Left cardiac atrium (tissue), 4 donors: ENCODE measurements at regions of chr6 and their contacts with region 1.

Region 1: DNA sequence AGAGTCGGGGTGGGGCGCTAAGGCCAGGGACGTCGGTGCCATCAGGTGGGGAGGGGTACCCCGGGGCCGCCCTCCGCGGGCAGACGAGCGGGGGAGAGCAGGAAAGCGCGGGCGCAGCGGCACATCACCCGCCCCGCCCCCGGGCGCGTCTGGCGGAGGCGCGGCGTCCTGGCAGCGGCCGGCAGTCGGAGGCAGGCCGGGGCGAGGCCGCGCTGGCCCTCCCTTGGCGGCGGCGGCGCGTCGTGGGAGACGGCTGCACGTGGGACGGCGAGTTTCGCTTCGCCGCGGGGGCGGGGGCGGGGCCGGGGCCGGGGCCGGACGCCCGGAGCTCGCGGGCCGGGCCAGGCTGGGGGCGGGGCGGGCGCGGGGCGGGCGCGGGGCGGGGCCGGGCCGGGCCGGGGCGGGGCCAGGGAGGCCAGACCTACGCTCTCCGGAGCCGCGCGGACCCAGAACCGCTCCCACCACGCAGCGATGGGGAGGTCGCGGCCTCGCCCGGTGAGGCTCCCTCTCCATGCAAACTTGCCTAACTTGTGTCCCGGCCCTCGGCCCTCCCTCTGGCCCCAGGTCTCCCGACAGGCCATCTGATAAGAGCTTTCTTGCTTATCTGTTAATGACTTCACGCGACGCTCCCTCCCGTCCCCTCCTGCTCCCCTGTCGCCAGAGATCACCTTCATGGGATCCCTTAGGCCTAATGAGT is 12.5 kb downstream of the ITPR3 start:
- DNase-seq: peak; percentile 81
- ATAC-seq: peak; percentile 86 to 90

Region 2: GRCh38 chr6:33317669-33318425 is 315.8 kb before region 1 on chr6 and contains the start of gene ZBTB22:
- intact Hi-C with region 1: no loop called
- DNase-seq: peak; percentile 100
- ATAC-seq: peak; percentile 77 to 84
- total RNA-seq, gene ZBTB22: 14.1 to 15.7 TPM

Region 3: DNA sequence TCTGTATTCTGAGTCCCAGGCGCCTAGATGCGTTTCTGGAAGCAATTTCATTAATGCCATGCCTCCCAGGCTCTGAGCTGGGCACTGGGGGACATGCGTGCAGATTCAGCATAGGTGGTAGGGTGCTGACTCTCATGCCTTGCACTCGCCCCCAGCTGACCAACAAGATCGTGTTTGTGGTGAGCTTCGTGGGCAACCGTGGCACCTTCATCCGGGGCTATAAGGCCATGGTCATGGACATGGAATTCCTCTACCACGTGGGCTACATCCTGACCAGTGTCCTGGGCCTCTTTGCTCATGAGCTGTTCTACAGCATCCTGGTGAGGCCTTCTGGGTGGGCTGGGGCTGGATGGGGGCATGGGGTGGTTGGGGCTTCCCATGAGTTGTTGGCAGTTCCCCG is 56.3 kb after region 1 on chr6:
- intact Hi-C with region 1: loop called (anchors 5 to 10 kb)
- DNase-seq: no peak
- ATAC-seq: no peak